Activated T-helper 2 cell treated with anti-CD3 and anti-CD28 coated beads, Interferon-gamma antibody, Interleukin-2, Interleukin-4, amounts not matched to agents 10 μg/mL and 5 μg/mL and 100 μg/mL, durations not matched to agents 14 hours and 24 hours and 36 hours (primary cell): ENCODE measurements at regions of chr14 and their contacts with region 1.

Region 1: GRCh38 chr14:97707603-97708002 is 910.4 kb downstream of the VRK1 start:
- DNase-seq: peak; percentile 22
- H3K4me3 Mint-ChIP-seq: no peak overlapping the region
- H3K27ac Mint-ChIP-seq: no peak overlapping the region
- H3K4me1 Mint-ChIP-seq: peaks cover 79% of the 10 kb centered on the region
- H3K27me3 Mint-ChIP-seq: no peaks in the 10 kb centered on the region

Region 2: GRCh38 chr14:97408937-97409815 is 298.4 kb before region 1 on chr14:
- intact Hi-C with region 1: loop called (anchors 10 kb)
- DNase-seq: peak; percentile 56
- H3K4me3 Mint-ChIP-seq: peak overlapping the region; percentile 64
- H3K27ac Mint-ChIP-seq: peak overlapping the region; percentile 92
- H3K4me1 Mint-ChIP-seq: peaks cover 32% of the 10 kb centered on the region
- H3K27me3 Mint-ChIP-seq: no peaks in the 10 kb centered on the region

Region 3: DNA sequence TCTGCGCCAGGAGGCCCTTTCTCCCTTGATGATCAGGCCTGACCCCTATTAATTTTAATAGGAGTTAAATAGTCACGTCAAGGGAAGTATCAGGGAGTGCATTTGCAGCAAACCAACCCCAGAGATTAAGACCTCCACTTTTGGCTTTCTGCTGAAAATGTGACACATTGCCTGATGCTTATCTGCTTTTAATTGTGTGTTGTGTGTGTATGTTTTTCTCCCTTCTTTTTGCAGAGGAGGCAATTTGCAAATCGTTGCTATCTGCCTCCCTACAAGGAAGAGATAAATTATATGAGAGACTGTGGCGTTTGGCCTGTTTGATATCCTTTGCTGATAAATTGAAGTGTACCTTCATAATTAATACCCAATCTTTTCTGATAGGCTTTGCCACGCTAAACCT is 87.5 kb before region 1 on chr14:
- intact Hi-C with region 1: loop called (anchors 5 kb)
- DNase-seq: no peak
- H3K4me3 Mint-ChIP-seq: peak overlapping the region; percentile 59
- H3K27ac Mint-ChIP-seq: peak overlapping the region; percentile 84
- H3K4me1 Mint-ChIP-seq: peaks cover 47% of the 10 kb centered on the region
- H3K27me3 Mint-ChIP-seq: no peaks in the 10 kb centered on the region

Region 4: DNA sequence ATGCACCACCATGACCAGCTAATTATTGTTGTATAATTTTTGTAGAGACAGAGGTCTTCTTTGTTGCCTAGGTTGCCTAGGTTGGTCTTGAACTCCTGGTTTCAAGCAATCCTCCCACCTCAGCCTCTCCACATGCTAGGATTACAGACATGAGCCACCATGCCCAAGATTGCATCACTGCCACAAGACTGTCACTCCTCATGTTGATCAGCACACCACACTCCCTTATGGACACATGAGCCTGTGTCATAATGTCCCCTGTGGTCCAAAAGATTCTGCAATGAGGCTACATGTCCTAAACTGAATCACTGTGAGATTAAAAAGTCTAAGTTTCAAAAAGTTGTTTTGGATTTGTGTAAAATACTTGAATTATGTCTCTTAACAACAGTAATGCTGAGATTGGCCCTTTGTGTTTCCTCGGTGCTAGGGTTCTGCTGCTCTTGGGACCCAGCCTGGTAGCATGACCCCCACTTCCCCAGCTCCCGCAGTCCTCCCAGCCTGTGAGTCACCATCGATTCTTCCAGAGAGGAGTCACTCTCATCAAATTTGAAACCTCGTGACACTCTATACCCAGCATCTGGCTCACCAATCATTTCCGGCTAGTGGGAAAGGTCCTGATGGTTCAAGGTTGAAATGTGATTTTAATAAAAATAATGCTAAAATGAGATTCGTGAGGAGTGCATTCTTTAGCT is 19.5 kb before region 1 on chr14:
- intact Hi-C with region 1: no loop called
- DNase-seq: no peak
- H3K4me3 Mint-ChIP-seq: no peak overlapping the region
- H3K27ac Mint-ChIP-seq: no peak overlapping the region
- H3K4me1 Mint-ChIP-seq: peaks cover 16% of the 10 kb centered on the region
- H3K27me3 Mint-ChIP-seq: no peaks in the 10 kb centered on the region

Region 5: GRCh38 chr14:97724265-97724731 is 16.7 kb after region 1 on chr14:
- intact Hi-C with region 1: loop called (anchors 2 kb)
- DNase-seq: peak; percentile 31
- H3K4me3 Mint-ChIP-seq: peak overlapping the region; percentile 72
- H3K27ac Mint-ChIP-seq: peak overlapping the region; percentile 95
- H3K4me1 Mint-ChIP-seq: peaks cover 58% of the 10 kb centered on the region
- H3K27me3 Mint-ChIP-seq: no peaks in the 10 kb centered on the region

Region 6: DNA sequence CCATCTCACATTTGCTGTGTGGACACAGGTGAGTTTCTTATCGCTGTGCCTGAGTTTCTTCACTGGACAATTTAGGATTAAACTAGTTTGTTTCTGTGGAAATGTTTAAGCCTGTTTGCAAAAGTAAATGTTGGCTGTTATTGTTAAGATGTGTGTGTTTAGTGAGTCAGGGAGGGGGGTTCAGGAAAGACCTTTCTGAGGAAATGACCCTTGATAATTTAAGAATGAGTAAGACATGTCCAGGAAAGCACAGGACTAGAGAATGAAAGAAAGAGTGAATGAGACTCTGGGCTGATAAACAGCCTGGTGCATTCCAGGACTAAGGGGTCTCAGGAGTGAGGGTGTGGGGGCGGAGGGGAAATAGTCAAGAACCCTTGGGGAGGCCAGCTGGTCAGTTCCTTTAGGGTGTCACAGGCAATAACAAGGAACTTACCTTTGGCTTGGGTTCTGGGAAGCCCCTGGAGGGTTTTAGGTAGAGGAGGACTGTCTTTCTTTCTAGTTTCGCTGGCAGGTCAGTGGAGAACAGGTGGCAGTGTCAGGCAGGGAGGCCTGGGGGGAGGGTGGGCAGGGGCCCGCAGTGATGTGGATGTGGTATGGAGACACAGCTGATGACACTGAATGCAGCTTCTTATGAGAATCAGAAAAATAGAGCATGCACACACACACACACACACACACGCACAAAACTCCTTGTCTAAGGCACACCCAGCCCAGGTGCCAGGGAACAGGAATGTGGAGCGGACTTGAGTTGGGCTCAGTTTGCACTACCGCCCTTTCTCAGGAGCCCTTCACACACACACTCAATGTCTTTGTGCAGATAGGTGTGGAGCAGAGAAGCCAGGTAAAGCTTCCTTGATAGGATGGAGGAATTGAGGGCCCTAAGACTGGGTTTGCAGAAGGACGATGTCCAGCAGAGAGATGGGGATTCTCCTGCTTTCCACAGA is 95.1 kb after region 1 on chr14:
- intact Hi-C with region 1: no loop called
- DNase-seq: no peak
- H3K4me3 Mint-ChIP-seq: no peak overlapping the region
- H3K27ac Mint-ChIP-seq: no peak overlapping the region
- H3K4me1 Mint-ChIP-seq: peaks cover 3% of the 10 kb centered on the region
- H3K27me3 Mint-ChIP-seq: peaks cover 8% of the 10 kb centered on the region